Activated T-helper 2 cell treated with anti-CD3 and anti-CD28 coated beads, Interferon-gamma antibody, Interleukin-2, Interleukin-4, amounts not matched to agents 10 μg/mL and 5 μg/mL and 100 μg/mL, durations not matched to agents 14 hours and 24 hours and 36 hours (primary cell): ENCODE measurements at regions of chr9 and their contacts with region 1.

Region 1: GRCh38 chr9:35481347-35481975 is 8.4 kb upstream of the RUSC2 start:
- DNase-seq: no peak
- H3K4me3 Mint-ChIP-seq: no peak overlapping the region
- H3K27ac Mint-ChIP-seq: no peak overlapping the region
- H3K4me1 Mint-ChIP-seq: no peaks in the 10 kb centered on the region
- H3K27me3 Mint-ChIP-seq: peaks cover 6% of the 10 kb centered on the region

Region 2: DNA sequence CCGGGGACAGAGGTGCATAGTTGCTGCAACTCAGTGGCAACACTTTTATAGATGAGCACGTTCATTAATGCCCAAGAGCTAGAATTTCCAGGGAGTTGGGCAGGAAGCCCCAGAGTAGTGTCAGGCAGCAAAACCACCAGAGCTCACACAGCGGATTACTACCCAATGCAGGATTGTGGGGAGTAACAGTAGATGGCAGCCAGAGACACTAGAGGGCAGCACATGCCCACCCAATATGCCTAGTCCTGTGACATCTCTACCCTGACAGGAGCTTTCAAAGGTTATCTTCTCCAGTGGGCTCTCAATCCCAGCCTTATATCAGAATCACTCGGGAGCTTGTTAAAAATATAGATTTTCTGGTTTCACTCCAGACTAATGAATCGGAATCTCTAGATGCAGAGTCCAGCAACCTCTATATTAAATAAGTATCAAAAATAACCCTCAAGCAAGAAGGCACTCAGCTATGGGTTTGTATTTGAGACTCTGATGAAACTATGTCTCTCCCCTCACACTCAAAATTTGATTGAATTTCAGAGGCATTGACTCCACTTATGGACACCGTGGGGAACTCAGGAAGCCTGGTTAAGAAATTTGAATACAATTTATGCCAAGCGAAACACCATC is 581.8 kb before region 1 on chr9:
- intact Hi-C with region 1: loop called (anchors 5 kb)
- DNase-seq: peak; percentile 63
- H3K4me3 Mint-ChIP-seq: no peak overlapping the region
- H3K27ac Mint-ChIP-seq: no peak overlapping the region
- H3K4me1 Mint-ChIP-seq: no peaks in the 10 kb centered on the region
- H3K27me3 Mint-ChIP-seq: peaks cover 37% of the 10 kb centered on the region

Region 3: DNA sequence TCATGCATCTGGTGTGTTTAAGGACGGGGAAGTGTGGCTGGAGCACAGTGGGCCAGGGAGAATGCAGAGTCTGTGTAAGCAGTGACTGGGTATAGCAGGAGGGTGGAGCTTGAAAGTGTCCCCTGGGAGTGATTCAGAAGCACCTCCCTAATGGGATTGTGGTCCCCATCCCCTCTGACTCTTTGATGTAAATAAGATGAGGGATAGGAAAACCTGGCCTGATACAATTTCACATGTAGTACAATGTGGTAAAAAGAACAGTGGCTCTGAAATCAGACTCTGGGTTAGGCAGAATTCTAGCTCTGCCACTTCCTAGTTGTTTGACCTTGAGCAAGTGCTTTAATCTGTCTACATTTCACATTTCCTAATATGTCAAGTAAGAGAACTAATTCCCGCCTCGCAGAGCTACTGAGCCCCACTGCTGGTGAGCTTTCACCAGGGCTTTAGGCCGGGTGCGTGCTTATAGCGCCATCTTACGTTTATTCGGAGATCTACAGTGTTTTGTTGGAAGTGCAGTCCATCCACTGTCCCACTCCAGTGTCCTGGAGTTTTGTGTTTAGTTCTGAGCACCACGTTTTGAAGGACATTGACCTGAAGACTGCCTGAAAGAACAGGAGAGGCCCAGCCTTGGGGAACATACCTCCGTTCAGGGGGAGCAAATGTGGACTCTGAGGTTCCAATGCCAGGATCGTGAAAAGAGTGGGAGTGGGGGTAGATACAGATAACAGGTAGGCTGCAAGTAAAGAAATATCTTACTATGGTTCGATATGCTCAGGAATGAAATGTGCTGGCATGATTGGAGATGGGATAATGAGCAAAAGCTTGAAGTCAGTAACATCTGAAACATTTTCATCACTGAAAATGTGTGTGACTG is 72.4 kb after region 1 on chr9:
- intact Hi-C with region 1: loop called (anchors 1 kb)
- DNase-seq: peak; percentile 16
- H3K4me3 Mint-ChIP-seq: no peak overlapping the region
- H3K27ac Mint-ChIP-seq: no peak overlapping the region
- H3K4me1 Mint-ChIP-seq: no peaks in the 10 kb centered on the region
- H3K27me3 Mint-ChIP-seq: no peaks in the 10 kb centered on the region